ENCODE measurements at regions of chr5 and their contacts with region 1.

Region 1: DNA sequence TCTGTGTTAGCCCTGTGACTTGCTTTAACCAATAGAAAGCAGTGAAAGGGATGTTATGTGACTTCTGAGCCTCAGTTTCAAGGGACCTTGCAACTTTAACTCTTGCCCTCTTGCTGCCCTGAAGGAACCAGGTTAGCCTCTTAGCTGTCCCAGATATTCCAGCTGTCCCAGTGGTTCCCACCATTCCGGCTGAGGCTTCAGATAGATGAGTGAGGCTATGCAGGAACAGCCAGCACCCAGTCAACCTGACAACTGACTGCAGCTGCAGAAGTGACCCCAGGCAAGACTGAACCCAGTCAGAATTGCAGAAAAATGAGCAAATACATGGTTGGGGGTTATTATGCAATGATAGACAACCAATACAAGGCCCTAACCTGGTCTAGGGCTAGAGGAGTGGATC is 10.4 kb upstream of the CDC23 start:
- DNase-seq: no peak
- ATAC-seq: no peak
- H3K4me3 Mint-ChIP-seq: no peak overlapping the region
- H3K27ac Mint-ChIP-seq: no peak overlapping the region
- H3K4me1 Mint-ChIP-seq: no peaks in the 10 kb centered on the region
- H3K27me3 Mint-ChIP-seq: peaks cover 11% of the 10 kb centered on the region
- CTCF ChIP-seq: no peak

Region 2: GRCh38 chr5:138271281-138271680 is 47.7 kb after region 1 on chr5:
- CTCF ChIA-PET with region 1: no interaction called
- POLR2A ChIA-PET with region 1: no interaction called
- intact Hi-C with region 1: no loop called
- DNase-seq: no peak
- ATAC-seq: no peak
- H3K4me3 Mint-ChIP-seq: no peak overlapping the region
- H3K27ac Mint-ChIP-seq: no peak overlapping the region
- H3K4me1 Mint-ChIP-seq: peaks cover 9% of the 10 kb centered on the region
- H3K27me3 Mint-ChIP-seq: peaks cover 25% of the 10 kb centered on the region
- CTCF ChIP-seq: no peak

Region 3: DNA sequence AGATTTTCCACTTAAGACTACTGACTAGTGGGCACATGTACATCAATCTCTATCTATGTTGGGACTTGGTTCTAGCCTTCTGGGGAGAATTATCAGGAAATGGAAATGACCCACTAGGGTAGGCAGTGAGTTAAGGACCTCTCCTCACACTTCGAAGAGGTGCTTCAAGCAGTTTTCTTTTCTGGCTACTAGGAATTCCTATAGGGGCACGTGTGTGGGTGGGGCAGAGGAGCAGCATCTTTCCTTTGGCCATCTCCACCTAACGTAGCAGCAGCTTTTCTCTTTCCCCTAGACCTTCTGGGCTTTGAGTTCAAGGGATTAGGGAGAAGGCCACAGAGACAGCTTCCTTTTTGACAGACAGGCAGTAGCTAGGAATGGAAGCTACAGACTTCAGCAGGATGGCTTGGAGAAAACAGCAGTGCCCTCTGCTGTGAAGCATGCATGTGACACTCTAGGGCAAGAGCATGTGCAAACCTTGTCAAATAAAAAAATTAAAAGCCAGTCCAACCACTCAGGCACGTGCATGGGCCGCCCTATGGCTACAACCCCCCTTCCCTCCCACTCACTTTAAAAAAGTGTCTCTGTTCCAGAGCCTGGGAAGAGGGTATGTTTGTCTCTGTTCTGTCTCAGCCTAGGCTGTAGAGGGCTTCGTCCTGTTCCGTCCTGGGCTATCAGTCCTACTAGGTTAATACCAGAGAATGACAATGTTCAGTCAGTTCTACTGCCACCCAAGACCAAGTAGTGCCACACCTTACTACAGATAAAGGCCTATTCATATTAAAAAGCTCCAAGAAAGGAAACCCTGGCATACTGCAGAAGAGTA is 59.6 kb after region 1 on chr5:
- CTCF ChIA-PET with region 1: interaction called, 5 read pairs
- POLR2A ChIA-PET with region 1: no interaction called
- intact Hi-C with region 1: loop called (anchors 5 kb)
- DNase-seq: peak; percentile 35
- ATAC-seq: peak; percentile 75
- H3K4me3 Mint-ChIP-seq: no peak overlapping the region
- H3K27ac Mint-ChIP-seq: no peak overlapping the region
- H3K4me1 Mint-ChIP-seq: no peaks in the 10 kb centered on the region
- H3K27me3 Mint-ChIP-seq: no peaks in the 10 kb centered on the region
- CTCF ChIP-seq: peak; percentile 18

Measured in activated CD8-positive, alpha-beta T cell treated with anti-CD3 and anti-CD28 coated beads for 36 hours (primary cell).